AG04449 (cell line): ENCODE measurements at regions of chr12 and their contacts with region 1.

Region 1: GRCh38 chr12:32455607-32456071 is 56.3 kb downstream of the FGD4 start:
- DNase-seq: peak; percentile 52
- H3K4me3 ChIP-seq: peak overlapping the region; percentile 45
- CTCF ChIP-seq: peak; percentile 26

Region 2: DNA sequence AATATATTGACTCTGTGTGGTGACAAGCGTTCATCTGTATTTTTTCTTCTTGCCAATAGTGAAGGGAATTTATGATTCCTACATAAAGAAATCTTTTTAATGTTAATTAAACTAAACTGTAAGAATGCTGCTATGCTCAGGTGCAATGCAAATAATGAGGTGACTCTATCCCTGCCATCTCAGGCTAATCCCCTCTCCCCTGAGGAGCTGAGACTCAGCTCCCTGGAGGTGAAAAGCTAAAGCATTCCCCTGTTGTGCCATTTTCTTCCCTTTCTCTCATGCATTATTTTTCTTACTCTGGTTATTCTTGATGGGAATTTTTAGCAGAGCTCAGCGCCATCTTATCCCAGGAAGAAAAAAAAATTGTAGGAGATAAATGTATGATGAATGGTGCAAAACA is 170.2 kb before region 1 on chr12:
- CTCF ChIA-PET with region 1: no interaction called
- POLR2A ChIA-PET with region 1: no interaction called
- DNase-seq: no peak
- H3K4me3 ChIP-seq: no peak overlapping the region
- CTCF ChIP-seq: no peak

Region 3: DNA sequence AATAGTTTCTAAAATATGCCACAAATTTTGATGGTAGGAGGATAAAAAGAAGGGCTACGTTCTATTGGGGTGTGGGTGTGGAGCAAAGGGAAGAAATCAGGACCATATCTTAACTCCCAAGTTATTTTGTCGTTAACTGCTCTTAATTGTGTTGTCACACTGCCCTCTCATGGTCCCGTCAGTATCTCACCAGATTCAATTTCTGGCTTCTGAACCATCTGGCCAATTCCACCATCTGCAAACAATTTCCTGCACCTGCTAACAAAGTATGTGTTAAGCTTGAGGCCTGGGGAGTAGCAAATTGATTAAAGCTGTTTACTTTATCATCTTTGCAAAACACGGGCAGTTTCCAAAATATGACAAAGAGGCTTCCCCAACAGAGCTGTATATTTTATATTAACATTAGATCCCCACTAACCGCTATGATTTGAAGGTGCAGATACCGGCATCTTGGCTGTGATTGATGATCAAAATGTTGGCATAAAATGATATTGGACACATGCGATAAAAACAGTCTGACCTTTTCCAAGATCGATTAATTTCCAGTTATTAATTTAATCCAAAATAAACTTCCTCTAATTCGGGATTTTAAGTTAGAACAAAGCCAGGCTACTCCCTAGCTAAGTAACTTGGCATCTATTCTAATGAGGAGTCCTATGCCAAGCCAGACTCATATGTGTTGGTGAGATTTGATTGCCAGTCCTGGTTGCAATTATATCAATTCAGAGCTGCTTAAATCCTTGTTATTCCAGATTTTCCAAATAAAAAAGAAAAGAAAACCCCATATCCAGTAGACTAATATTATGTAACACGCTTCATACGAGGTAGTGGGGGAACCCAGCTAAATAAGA is 216.5 kb after region 1 on chr12:
- CTCF ChIA-PET with region 1: interaction called, 59 read pairs
- POLR2A ChIA-PET with region 1: interaction called, 3 read pairs
- DNase-seq: peak; percentile 33
- H3K4me3 ChIP-seq: no peak overlapping the region
- CTCF ChIP-seq: peak; percentile 57

Region 4: GRCh38 chr12:32688786-32689185 is 233.1 kb after region 1 on chr12:
- CTCF ChIA-PET with region 1: interaction called, 11 read pairs
- POLR2A ChIA-PET with region 1: no interaction called
- DNase-seq: no peak
- H3K4me3 ChIP-seq: no peak overlapping the region
- CTCF ChIP-seq: no peak